Posterior cingulate gyrus (tissue), 11 donors: ENCODE measurements at regions of chr6 and their contacts with region 1.

Region 1: GRCh38 chr6:87472525-87473418 is at the start of gene SLC35A1:
- DNase-seq: peak; percentile 79 to 98 (median 86)

Region 2: DNA sequence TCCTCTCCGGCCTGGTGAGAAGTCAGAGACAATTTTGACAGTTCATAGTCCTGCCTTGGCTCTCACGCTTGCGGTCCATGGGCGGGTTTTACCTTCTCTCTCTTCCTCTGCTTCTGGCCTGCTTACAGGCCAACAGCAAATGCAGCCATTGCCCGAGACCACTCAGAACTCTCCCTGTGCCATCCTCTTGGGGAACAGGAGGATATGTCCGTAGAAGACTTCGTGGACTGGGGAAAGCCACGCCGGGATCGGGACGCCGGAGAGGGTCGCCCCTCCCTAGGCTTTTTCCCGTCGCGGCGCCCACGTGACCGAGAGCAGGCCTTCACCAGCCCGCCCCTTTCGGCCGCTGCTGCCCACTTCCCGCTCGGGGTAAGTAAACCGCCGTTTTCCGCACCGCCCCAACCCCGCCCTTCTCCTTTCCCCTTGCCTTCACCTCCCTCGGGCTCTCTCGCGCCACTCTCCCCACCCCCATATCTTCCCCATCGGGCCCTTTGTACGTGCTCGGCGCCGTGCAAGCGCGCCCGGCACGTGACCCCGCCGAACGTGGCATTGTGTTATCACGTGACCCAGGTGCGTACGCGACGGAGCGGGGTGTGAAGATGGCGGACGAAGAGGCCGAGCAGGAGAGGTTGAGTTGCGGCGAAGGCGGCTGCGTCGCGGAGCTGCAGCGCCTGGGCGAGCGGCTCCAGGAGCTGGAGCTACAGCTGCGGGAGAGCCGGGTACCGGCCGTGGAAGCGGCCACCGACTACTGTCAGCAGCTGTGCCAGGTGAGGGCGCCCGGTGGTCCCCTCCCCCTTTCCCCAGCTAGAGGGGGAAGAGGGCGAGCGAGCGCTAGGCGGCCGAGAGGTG is 317.6 kb before region 1 on chr6 and contains the start of gene ZNF292:
- intact Hi-C with region 1: loop called (anchors 5 kb)
- DNase-seq: peak; percentile 89 to 99 (median 92)

Region 3: DNA sequence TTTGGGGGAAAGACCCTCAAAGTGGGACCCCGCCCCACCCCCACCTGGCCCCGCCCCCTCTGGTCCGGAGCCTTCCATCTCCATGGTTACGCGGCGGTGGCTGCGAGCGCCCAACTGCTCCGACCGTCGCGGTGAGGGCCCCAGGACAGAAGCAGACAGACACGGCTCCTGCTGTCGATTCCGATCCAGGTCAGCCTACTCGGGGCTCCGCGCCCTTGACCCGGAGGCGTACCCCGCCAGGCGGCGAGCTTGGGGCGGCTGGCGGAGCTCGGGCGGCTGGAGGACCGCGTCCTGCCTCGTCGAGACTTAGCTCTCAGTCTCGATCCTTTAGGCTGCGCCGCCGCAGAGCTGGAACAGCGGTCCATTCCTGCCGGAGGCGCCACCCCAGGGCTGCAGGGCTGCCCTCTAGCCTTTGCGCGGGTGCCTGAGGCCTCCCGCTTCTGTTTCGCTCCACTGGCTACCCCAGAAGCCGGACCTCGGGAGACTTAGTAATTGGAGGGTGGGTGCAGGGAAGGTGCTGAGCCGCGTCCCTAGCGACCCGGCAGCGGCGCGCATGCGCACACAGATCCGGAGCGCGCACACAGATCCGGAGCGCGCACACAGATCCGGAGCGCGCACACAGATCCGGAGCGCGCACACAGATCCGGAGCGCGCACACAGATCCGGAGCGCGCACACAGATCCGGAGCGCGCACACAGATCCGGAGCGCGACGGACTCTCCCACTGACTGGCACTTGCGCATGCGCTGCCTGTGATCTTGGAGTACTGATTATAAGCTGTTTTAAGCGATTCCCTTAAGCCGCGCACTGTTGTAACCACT is 64.7 kb before region 1 on chr6 and contains the start of gene CFAP206:
- intact Hi-C with region 1: loop called (anchors 2 kb)
- DNase-seq: peak; percentile 54 to 96 (median 73)

Region 4: DNA sequence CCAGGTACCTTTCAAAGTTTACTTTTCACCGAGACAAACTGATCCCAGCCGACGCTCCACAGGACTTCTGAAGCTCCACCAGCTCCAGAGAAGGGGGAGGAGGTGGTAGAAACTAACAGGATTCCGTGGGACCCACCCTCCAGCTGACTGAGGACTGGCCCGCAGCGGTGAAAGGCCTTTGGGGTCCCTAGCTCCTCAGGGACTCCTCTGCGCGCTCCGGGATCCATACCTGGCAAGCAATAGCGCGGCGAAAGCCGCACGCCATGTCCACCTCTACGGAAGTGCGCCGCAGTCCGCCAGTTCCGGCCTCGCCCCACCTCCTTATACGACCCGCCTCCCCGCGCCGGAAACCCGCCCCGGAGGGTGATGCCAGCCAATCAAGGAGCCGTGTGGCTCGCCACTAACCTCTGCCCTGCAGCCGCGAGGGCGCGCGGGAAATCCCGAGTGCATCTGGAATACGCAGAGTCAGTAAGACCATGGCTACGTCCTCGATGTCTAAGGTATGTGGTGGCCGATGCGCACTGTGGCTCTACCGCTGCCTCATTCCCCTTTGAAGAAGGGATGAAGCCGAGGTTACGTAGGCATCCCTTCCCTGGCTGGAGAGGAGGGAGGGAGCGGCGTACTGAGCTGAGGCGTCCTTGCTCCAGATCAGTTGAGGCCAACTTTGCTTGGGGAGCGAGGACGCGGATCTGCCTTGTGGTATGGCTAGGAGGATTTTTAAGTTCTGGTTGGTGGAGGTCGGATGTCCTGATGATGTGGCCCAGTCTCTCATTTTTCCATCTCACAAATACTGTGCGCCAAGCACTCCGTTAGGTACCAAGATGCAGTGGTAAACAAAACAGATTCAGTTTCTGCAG is 117.1 kb after region 1 on chr6 and contains the starts of genes ORC3 and RARS2:
- intact Hi-C with region 1: loop called (anchors 5 kb)
- DNase-seq: peak; percentile 94 to 100 (median 98)

Region 5: GRCh38 chr6:87701676-87702588 is 229.2 kb after region 1 on chr6 and contains the start of gene AKIRIN2:
- intact Hi-C with region 1: loop called (anchors 1 kb)
- DNase-seq: peak; percentile 92 to 99 (median 96)